ENCODE measurements at regions of chr18 and their contacts with region 1.

Region 1: GRCh38 chr18:26383454-26384270 is 157.4 kb downstream of the TAF4B start:
- DNase-seq: no peak
- H3K4me3 ChIP-seq: no peak overlapping the region
- H3K27ac ChIP-seq: no peak overlapping the region
- H3K4me1 ChIP-seq: no peaks in the 10 kb centered on the region
- H3K27me3 ChIP-seq: no peaks in the 10 kb centered on the region
- CTCF ChIP-seq: peak in 2 of 3 experiments; percentile 51 to 67; a peak in 2 of 4 replicates
- EP300 ChIP-seq: no peak
- POLR2A ChIP-seq: no peak
- RAD21 ChIP-seq: peak; percentile 63 to 65

Region 2: GRCh38 chr18:26317398-26317797 is 66.3 kb before region 1 on chr18:
- CTCF ChIA-PET with region 1: no interaction called
- POLR2A ChIA-PET with region 1: no interaction called
- DNase-seq: no peak
- H3K4me3 ChIP-seq: no peak overlapping the region
- H3K27ac ChIP-seq: no peak overlapping the region
- H3K4me1 ChIP-seq: peaks cover 0 to 2% (median 0%) of the 10 kb centered on the region in 4 experiments; a peak in 1 of 7 replicates
- H3K27me3 ChIP-seq: no peaks in the 10 kb centered on the region
- CTCF ChIP-seq: no peak
- EP300 ChIP-seq: no peak
- POLR2A ChIP-seq: no peak
- RAD21 ChIP-seq: no peak

Region 3: GRCh38 chr18:26342648-26343047 is 41.0 kb before region 1 on chr18:
- CTCF ChIA-PET with region 1: no interaction called
- POLR2A ChIA-PET with region 1: no interaction called
- DNase-seq: no peak
- H3K4me3 ChIP-seq: no peak overlapping the region
- H3K27ac ChIP-seq: no peak overlapping the region
- H3K4me1 ChIP-seq: no peaks in the 10 kb centered on the region
- H3K27me3 ChIP-seq: no peaks in the 10 kb centered on the region
- CTCF ChIP-seq: no peak
- EP300 ChIP-seq: no peak
- POLR2A ChIP-seq: no peak
- RAD21 ChIP-seq: no peak

Region 4: GRCh38 chr18:26370037-26370436 is 13.6 kb before region 1 on chr18:
- CTCF ChIA-PET with region 1: interaction called, 40 read pairs
- POLR2A ChIA-PET with region 1: no interaction called
- DNase-seq: no peak
- H3K4me3 ChIP-seq: no peak overlapping the region
- H3K27ac ChIP-seq: no peak overlapping the region
- H3K4me1 ChIP-seq: no peaks in the 10 kb centered on the region
- H3K27me3 ChIP-seq: no peaks in the 10 kb centered on the region
- CTCF ChIP-seq: no peak
- EP300 ChIP-seq: no peak
- POLR2A ChIP-seq: no peak
- RAD21 ChIP-seq: no peak

Region 5: GRCh38 chr18:26397019-26397418 is 13.4 kb after region 1 on chr18:
- CTCF ChIA-PET with region 1: interaction called, 12 read pairs
- POLR2A ChIA-PET with region 1: no interaction called
- DNase-seq: no peak
- H3K4me3 ChIP-seq: no peak overlapping the region
- H3K27ac ChIP-seq: no peak overlapping the region
- H3K4me1 ChIP-seq: no peaks in the 10 kb centered on the region
- H3K27me3 ChIP-seq: no peaks in the 10 kb centered on the region
- CTCF ChIP-seq: no peak
- EP300 ChIP-seq: no peak
- POLR2A ChIP-seq: no peak
- RAD21 ChIP-seq: no peak

Region 6: DNA sequence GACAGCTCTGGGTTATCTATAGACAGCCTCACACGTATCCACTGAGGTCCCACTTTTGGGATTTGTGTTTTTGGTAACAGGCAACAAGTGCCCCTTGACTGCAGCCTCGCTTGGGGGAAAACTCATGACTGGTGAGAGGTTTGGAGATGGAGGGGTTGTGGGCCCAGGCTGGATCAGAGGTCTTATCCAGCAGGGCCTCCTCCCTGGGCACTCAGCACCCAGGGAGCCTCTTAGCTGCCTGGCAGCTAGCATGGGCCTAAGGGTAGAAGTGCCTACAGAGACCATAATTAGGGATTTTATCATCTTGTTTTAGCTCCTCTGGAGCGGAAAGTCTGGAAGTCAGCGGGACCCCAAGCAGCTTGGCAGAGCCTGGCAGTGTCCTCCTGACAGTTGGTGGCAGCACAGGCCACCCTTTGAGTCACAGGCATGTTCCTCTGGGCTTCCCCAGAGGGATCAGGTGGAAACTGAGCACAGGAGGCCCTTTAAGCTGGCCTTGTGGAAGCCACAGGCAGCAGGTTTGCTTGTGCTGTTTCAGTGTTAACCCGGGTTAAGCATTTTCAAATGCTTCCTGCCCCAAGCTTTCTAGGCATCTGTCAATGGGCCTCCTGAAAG is 21.6 kb after region 1 on chr18:
- CTCF ChIA-PET with region 1: interaction called, 26 read pairs
- POLR2A ChIA-PET with region 1: no interaction called
- DNase-seq: no peak
- H3K4me3 ChIP-seq: no peak overlapping the region
- H3K27ac ChIP-seq: no peak overlapping the region
- H3K4me1 ChIP-seq: peaks cover 0 to 4% (median 2%) of the 10 kb centered on the region in 4 experiments; a peak in 2 of 7 replicates
- H3K27me3 ChIP-seq: no peaks in the 10 kb centered on the region
- CTCF ChIP-seq: peak; percentile 44 to 58 (median 51)
- EP300 ChIP-seq: no peak
- POLR2A ChIP-seq: no peak
- RAD21 ChIP-seq: peak; percentile 73 to 78

Region 7: GRCh38 chr18:26971409-26971808 is 587.7 kb after region 1 on chr18:
- CTCF ChIA-PET with region 1: no interaction called
- POLR2A ChIA-PET with region 1: no interaction called
- DNase-seq: no peak
- H3K4me3 ChIP-seq: no peak overlapping the region
- H3K27ac ChIP-seq: no peak overlapping the region
- H3K4me1 ChIP-seq: no peaks in the 10 kb centered on the region
- H3K27me3 ChIP-seq: no peaks in the 10 kb centered on the region
- CTCF ChIP-seq: no peak
- EP300 ChIP-seq: no peak
- POLR2A ChIP-seq: no peak
- RAD21 ChIP-seq: no peak

Measured in H1 (cell line).